ENCODE measurements at regions of chr4 and their contacts with region 1.

Region 1: DNA sequence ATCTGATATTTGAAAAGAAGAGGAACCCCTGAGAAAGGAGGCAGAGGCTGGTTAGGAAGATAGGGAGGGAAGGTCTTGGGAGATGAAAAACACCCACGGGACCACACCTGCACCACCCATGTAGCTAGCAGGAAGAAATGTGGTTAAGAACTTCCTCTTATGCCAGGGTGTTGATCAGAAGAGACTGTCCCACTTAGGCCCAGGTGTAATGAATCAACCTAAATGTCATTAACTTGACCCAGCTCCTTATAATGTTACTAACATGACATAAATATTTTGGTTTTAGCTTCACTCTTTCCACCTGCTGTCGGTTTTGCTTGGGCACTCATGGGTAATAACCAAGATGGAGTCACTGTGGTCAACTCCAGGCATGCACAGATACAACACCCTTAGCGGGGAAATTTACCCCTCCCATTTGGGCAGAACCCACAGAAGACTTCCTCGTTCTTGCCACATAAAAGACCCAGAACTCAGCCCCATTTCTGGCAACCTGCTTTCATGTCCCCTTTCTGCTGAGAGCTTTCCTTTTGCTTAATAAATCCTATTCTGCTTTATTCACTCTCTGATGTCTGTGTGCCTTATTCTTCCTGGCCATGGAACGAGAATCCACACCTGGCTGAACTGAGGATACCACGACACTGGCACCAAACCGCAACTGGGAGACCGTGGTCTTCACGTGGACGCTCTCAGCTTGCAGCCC is 46.8 kb downstream of the ZNF141 start:
- DNase-seq: no peak
- H3K4me3 ChIP-seq: peak overlapping the region in 1 of 3 donors; percentile 3
- H3K27ac ChIP-seq: no peak overlapping the region
- H3K4me1 ChIP-seq: no peaks in the 10 kb centered on the region
- H3K27me3 ChIP-seq: no peaks in the 10 kb centered on the region
- CTCF ChIP-seq: no peak
- POLR2A ChIP-seq: no peak

Region 2: DNA sequence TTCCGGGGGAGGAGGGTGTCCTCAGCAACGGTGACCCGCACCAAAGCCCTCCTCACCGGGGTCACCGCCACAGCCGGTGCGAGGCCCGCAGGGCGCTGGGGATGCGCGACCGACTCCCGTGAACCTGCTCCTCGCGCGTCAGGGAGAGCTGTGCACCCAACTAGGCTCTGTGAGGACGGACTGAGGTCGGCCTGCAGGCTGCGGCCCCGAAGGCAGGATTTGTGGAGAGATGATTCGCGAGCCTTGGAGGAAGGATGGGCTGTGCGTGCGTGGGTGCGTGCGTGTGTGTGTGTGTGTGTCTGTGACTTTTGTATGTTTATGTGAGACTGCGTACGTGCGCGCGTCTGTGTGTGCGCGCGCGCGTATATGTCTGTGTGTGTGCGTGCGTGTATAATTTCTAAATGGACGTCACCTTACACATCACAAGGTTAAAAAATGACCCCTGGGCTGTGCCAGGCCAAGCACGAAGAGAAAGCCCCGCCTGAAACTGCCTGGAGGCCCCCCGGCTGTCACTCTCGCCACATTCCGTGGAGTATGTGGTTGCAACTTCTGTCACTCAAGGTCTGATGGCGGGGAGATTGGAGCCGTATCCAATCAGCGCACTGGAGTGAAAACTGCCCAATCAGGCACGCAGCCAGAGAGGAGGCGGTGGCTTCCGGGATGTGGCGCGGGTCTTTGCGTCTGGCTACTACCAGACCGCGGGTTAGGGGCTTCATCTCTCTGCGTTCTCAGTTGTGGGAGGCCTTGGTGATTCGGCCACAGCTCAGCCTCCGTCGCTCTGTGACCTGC is 47.1 kb before region 1 on chr4 and contains the start of gene ZNF141:
- intact Hi-C with region 1: no loop called
- DNase-seq: peak; percentile 97
- H3K4me3 ChIP-seq: peak within 1 kb of the TSS; percentile 74 to 95 (median 94)
- H3K27ac ChIP-seq: peak within 1 kb of the TSS; percentile 93 to 98
- H3K4me1 ChIP-seq: peaks cover 0 to 8% of the 10 kb centered on the region in 2 donors
- H3K27me3 ChIP-seq: no peaks in the 10 kb centered on the region
- CTCF ChIP-seq: no peak
- POLR2A ChIP-seq: peak; percentile 61
- total RNA-seq, gene ZNF141: 19.5 to 53.0 (median 39.0) TPM

Region 3: GRCh38 chr4:683982-684622 is 299.6 kb after region 1 on chr4:
- intact Hi-C with region 1: no loop called
- DNase-seq: no peak
- H3K4me3 ChIP-seq: no peak overlapping the region
- H3K27ac ChIP-seq: no peak overlapping the region
- H3K4me1 ChIP-seq: peaks cover 19 to 23% of the 10 kb centered on the region in 2 donors
- H3K27me3 ChIP-seq: no peaks in the 10 kb centered on the region
- CTCF ChIP-seq: peak in 2 of 3 donors; percentile 37 to 41
- POLR2A ChIP-seq: no peak

Region 4: DNA sequence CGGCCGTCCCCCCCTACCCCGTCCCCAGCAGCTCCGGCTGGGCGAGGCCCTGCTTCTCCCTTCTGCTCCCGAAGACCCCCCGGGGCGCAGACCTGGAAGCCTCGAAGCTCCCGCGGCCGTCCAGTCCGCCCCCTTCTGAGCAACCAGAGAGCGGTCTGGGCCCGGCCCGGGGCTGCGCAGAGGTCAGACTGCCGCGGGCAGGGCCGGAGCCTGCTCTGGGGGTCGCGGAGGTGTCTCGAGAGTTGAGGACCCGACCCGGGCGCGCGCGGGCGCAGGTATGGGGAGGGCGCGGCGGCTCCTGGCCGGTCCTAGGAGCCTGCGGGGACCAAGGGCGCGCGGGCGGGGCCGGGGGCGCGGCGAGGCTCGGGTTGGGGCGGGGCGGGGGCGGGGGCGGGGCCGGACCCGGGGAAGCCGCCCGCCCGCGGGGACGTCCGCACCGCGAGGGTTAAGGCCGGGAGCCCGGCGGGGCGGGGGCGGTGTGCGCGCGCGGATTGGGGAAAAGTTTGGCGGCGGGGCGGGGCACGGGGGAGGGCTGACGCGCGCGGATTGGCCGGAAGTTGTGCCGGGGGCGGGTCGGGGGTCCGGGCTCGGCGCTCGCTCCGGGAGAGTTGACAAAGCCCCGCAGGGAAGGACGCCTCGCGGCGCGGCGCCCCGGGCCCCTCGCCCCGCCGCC is 626.7 kb after region 1 on chr4 and contains the start of gene FGFRL1:
- intact Hi-C with region 1: no loop called
- DNase-seq: peak; percentile 76 to 92
- H3K4me3 ChIP-seq: peak within 1 kb of the TSS; percentile 47 to 81 (median 66)
- H3K27ac ChIP-seq: peak within 1 kb of the TSS; percentile 75 to 85
- H3K4me1 ChIP-seq: peaks cover 9 to 16% of the 10 kb centered on the region in 2 donors
- H3K27me3 ChIP-seq: peaks cover 0 to 1% of the 10 kb centered on the region in 2 donors
- CTCF ChIP-seq: no peak
- POLR2A ChIP-seq: no peak
- total RNA-seq, gene FGFRL1: 19.8 to 40.0 (median 22.9) TPM

Region 5: DNA sequence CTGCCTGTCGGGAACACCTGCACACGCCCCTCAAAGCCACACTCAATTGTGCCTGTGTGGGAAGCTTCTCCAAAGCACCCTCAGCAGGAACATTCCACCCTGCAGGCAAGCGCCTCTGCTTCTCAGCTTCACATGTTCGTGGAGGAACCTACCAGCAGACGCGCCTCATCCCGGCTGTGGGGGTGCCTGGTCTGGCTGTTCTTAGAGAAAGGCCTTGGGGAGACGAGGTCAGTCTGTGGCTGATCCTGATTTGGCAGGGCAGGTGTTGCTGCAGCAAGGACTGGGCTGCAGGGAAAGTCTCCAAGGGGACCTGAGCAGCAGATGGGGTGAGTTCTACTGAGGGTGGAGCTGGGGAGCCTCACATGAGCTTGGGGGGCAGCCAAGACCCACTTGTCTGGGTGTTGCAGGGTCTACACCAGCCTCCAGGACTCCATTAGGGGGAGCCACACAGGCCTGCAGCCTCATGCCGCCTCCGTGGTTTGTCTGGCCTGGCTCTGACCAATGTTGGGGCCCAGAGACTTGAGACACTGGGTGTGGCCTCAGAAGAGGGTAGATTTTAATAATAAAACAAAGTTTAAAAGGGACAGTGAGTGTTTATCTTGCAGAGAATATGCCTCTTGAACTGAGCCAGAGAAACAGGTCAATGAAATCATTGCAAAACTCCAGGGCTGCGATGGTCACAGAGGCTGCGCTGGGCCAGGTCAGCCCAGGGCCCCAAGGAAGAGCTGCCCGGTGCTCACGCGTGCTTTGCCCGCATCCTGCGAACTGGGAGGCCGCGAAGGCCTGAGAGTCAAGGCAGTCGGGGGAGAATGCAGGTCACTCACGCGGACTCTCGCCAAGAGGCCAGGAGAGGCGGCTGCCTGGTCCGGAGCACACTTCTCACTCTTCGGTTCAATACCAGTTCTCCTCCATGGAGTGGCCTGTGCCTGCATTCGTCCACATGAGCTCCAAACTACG is 707.8 kb after region 1 on chr4:
- intact Hi-C with region 1: no loop called
- DNase-seq: peak in 1 of 2 donors; percentile 51
- H3K4me3 ChIP-seq: no peak overlapping the region
- H3K27ac ChIP-seq: no peak overlapping the region
- H3K4me1 ChIP-seq: no peaks in the 10 kb centered on the region
- H3K27me3 ChIP-seq: no peaks in the 10 kb centered on the region
- CTCF ChIP-seq: no peak
- POLR2A ChIP-seq: no peak

Region 6: DNA sequence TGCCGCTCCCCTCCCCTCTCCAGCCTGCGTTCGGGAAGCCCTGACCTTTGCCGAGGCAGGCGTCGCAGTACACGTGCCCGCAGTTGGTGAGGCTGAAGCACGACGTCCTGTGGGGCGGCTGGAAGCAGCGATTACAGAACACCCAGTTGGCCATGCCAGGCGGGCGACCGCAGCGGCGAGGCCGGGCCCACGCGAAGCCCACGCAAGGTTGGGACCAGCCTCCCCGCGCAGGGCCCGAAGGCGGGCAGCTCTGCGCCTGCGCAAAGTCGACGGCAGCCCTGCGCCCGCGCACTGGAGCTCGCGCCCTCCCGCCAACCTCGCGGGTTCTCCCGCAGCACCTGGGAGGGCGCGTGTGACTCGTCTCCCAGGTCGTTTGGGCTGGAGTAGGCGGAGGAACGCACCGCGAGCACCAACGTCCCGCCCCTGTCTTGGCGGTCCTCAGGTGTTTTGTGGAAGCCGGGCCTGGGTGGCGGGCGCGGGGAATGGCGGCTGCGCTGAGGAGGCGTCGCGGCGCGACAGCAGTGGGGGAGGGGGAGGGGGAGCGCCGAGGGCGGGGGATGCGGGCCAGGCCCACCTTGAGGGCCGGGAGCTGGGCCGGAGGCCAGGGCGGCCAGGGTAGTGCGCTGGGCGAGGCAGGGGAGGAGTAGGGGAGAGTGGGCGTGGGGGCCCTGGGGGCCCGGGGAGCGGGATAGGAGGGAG is 729.0 kb after region 1 on chr4 and contains the start of gene RNF212:
- intact Hi-C with region 1: loop called (anchors 10 kb)
- DNase-seq: no peak
- H3K4me3 ChIP-seq: peak within 1 kb of the TSS; percentile 37 to 69 (median 49)
- H3K27ac ChIP-seq: peak within 1 kb of the TSS in 1 of 2 donors; percentile 33
- H3K4me1 ChIP-seq: no peaks in the 10 kb centered on the region
- H3K27me3 ChIP-seq: peaks cover 0 to 3% of the 10 kb centered on the region in 2 donors
- CTCF ChIP-seq: no peak
- POLR2A ChIP-seq: no peak
- total RNA-seq, gene RNF212: 5.1 to 15.7 (median 6.4) TPM